Mammary epithelial cell (primary cell): ENCODE measurements at regions of chr7 and their contacts with region 1.

Region 1: DNA sequence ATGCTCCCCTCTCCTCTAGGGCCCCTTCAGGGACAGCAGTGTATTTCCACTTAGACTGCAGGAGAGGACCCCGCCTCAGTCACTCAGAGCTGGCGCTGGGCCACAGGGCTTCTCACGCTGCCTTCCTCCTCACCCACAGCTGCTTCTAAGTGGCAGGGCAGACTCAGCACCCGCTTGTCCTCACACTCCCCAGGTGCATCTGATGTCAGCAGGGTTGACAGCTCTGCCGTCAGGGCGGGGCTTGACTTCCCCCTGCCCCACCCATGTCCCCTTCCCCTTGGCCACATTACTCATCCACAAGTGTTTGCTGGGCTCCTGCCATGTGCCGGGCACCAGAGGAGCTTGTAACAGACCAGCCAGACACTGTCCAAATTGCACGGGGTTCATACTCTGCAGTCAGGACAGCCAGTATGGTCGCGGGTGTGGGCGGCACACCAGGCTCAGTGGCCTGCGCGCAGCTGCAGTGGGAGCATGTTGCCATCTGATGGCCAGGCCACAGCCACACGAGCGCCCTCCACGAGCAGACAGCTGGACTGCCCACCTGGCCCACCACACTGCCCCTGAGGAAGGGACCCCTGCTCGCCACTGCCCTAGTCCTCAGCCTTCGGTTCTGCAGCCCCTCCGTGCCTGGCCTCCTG is 29.3 kb upstream of the TTYH3 start:
- DNase-seq: no peak
- H3K4me3 ChIP-seq: no peak overlapping the region
- H3K27ac ChIP-seq: no peak overlapping the region
- H3K4me1 ChIP-seq: no peaks in the 10 kb centered on the region
- H3K27me3 ChIP-seq: no peaks in the 10 kb centered on the region
- CTCF ChIP-seq: no peak

Region 2: DNA sequence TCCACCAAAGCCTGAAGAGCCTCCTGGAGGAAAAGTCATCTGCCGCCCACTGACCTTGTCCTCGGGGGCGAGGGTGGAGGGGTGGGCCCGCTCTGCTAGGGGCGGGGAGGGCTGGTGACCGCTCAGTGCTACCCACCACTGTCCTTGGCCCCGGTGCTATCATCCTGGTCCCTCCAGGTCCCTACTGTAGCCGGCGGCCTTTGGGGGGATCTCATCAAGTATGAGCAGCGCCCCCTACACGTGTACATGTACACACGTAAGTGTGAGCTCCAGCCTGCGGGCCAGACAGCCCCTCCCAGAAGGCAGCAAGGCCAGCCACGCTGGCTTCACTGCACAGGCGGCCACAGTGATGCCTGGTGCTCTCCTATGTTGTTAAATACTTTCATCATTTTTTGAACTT is 48.8 kb after region 1 on chr7:
- CTCF ChIA-PET with region 1: no interaction called
- dilution Hi-C with region 1: loop called (anchors 5 kb)
- in situ Hi-C with region 1: no loop called
- intact Hi-C with region 1: no loop called
- DNase-seq: no peak
- H3K4me3 ChIP-seq: no peak overlapping the region
- H3K27ac ChIP-seq: no peak overlapping the region
- H3K4me1 ChIP-seq: no peaks in the 10 kb centered on the region
- H3K27me3 ChIP-seq: no peaks in the 10 kb centered on the region
- CTCF ChIP-seq: no peak

Region 3: DNA sequence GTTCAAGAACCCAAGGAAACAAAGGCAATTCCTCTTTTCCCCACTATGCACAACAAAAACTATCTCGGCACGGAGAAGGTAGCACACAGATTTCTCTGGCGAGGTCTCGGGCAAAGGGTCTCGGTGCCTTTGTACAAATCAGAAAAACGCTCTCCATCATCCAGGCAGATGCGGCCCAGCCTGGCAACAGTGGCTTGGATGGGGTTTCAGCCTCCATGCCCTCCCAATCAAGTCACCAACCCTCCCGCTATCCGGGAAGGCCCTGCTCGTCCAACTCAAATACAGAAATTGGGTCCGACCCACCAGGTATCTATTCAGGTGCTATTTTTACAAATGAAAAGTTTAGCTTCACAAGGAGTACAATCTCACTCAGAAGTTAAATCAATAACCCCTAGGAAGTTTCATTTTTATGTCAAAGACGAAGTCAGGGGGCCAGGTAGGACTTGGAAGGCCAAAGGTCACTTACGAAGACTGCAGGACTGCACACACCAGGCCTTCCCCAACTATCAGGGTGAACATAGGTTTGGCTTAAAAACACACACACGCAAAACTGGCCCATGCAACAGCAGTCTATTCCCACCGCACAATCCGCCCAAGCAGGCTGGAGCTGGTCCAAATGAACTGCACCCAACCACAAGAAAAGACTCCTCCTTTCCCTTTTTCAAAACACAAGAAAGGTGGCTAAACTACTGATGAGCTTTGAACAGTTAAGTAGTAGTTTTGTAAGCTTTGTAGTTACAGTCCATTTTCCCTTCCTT is 198.6 kb after region 1 on chr7:
- CTCF ChIA-PET with region 1: no interaction called
- dilution Hi-C with region 1: no loop called
- in situ Hi-C with region 1: no loop called
- intact Hi-C with region 1: no loop called
- DNase-seq: peak; percentile 35
- H3K4me3 ChIP-seq: no peak overlapping the region
- H3K27ac ChIP-seq: no peak overlapping the region
- H3K4me1 ChIP-seq: peaks cover 13% of the 10 kb centered on the region
- H3K27me3 ChIP-seq: no peaks in the 10 kb centered on the region
- CTCF ChIP-seq: no peak